ENCODE measurements at regions of chr11 and their contacts with region 1.

Region 1: GRCh38 chr11:23041001-23041503 is 180.8 kb upstream of the CCDC179 start:
- DNase-seq: no peak
- ATAC-seq: no peak
- H3K4me3 ChIP-seq: no peak overlapping the region
- H3K4me3 Mint-ChIP-seq: no peak overlapping the region
- H3K27ac ChIP-seq: no peak overlapping the region
- H3K27ac Mint-ChIP-seq: no peak overlapping the region
- H3K4me1 ChIP-seq: no peaks in the 10 kb centered on the region
- H3K4me1 Mint-ChIP-seq: no peaks in the 10 kb centered on the region
- H3K27me3 ChIP-seq: no peaks in the 10 kb centered on the region
- H3K27me3 Mint-ChIP-seq: no peaks in the 10 kb centered on the region
- CTCF ChIP-seq: no peak

Region 2: DNA sequence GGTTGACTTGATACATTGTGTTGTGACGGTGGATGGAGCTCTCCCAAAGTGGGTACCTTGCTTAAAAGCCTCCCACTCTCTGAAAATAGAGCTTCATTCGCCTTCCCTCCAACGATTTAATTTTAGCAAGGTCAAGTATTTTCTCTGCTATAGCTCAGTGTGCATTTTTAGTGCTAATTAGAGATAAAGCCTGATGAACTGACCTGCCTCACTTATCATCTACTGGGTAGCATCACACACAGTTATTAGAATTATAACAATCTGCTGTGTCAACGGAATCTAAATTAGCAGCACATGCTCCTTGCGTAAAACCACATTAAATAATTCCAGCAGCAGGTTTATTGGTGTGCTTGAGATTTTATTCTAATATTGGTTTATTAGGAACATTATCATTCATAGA is 1670.0 kb before region 1 on chr11:
- CTCF ChIA-PET with region 1: no interaction called
- POLR2A ChIA-PET with region 1: no interaction called
- intact Hi-C with region 1: loop called in 1 of 2 experiments (anchors 5 kb)
- DNase-seq: no peak
- ATAC-seq: no peak
- H3K4me3 ChIP-seq: no peak overlapping the region
- H3K4me3 Mint-ChIP-seq: no peak overlapping the region
- H3K27ac ChIP-seq: no peak overlapping the region
- H3K27ac Mint-ChIP-seq: no peak overlapping the region
- H3K4me1 ChIP-seq: no peaks in the 10 kb centered on the region
- H3K4me1 Mint-ChIP-seq: no peaks in the 10 kb centered on the region
- H3K27me3 ChIP-seq: no peaks in the 10 kb centered on the region
- H3K27me3 Mint-ChIP-seq: no peaks in the 10 kb centered on the region
- CTCF ChIP-seq: no peak

Measured in CD4-positive, alpha-beta T cell (primary cell).